Naive thymus-derived CD8-positive, alpha-beta T cell (primary cell): ENCODE measurements at regions of chr17 and their contacts with region 1.

Region 1: DNA sequence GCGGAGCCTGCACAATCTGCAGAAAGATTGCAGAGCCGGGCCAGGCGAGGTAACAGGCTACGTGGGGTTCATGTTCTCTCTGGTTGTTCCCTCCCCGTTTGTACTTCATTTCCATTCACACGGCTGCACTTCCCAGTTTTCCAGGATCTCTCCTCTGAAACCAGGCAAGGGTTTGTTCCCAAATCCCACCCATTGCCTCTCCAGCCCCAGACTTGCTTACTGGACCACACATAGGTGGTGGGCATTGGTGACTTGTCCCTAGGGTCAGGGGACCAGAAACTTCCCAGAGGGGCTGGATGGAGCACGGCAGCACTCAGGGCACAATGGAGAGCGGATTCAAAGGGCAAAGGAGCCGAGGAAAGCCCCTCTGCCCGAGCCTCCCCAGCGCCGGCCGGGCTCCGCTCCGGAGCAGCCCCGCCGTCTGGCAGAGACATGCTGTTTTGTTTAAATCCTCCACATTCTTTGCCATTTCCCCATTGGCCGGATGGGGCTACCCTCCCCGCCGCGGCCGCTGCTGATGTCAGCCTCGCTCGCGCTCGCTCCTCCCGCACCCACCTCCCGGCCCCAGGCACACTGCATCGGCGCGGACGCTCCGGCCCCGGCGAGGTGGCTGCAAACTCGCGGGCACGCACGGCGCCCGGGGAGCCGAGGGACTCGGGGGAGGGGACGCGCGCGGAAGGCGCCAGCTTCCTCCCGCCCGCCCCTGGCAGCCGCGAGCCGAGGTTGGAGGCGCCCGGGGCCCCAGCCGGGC is at the start of gene PITPNC1:
- DNase-seq: peak; percentile 81 to 93 (median 86)
- ATAC-seq: peak; percentile 70 to 74
- H3K4me3 Mint-ChIP-seq: peak within 1 kb of the TSS; percentile 89 to 99 (median 94)
- H3K27ac Mint-ChIP-seq: peak within 1 kb of the TSS; percentile 45 to 97 (median 94)
- H3K4me1 Mint-ChIP-seq: peaks cover 24 to 47% (median 44%) of the 10 kb centered on the region in 4 donors
- H3K27me3 Mint-ChIP-seq: no peaks in the 10 kb centered on the region
- polyA plus RNA-seq, gene PITPNC1: 119 to 159 (median 125) TPM

Region 2: GRCh38 chr17:67336859-67337258 is 40.1 kb before region 1 on chr17:
- POLR2A ChIA-PET with region 1: no interaction called
- DNase-seq: no peak
- ATAC-seq: no peak
- H3K4me3 Mint-ChIP-seq: no peak overlapping the region
- H3K27ac Mint-ChIP-seq: peak overlapping the region in 2 of 10 donors; percentile 19 to 67
- H3K4me1 Mint-ChIP-seq: no peaks in the 10 kb centered on the region
- H3K27me3 Mint-ChIP-seq: no peaks in the 10 kb centered on the region

Region 3: GRCh38 chr17:67347826-67348225 is 29.1 kb before region 1 on chr17:
- POLR2A ChIA-PET with region 1: no interaction called
- DNase-seq: no peak
- ATAC-seq: no peak
- H3K4me3 Mint-ChIP-seq: no peak overlapping the region
- H3K27ac Mint-ChIP-seq: peak overlapping the region in 3 of 10 donors; percentile 3 to 49 (median 34)
- H3K4me1 Mint-ChIP-seq: peaks cover 0 to 5% (median 2%) of the 10 kb centered on the region in 4 donors
- H3K27me3 Mint-ChIP-seq: no peaks in the 10 kb centered on the region

Region 4: DNA sequence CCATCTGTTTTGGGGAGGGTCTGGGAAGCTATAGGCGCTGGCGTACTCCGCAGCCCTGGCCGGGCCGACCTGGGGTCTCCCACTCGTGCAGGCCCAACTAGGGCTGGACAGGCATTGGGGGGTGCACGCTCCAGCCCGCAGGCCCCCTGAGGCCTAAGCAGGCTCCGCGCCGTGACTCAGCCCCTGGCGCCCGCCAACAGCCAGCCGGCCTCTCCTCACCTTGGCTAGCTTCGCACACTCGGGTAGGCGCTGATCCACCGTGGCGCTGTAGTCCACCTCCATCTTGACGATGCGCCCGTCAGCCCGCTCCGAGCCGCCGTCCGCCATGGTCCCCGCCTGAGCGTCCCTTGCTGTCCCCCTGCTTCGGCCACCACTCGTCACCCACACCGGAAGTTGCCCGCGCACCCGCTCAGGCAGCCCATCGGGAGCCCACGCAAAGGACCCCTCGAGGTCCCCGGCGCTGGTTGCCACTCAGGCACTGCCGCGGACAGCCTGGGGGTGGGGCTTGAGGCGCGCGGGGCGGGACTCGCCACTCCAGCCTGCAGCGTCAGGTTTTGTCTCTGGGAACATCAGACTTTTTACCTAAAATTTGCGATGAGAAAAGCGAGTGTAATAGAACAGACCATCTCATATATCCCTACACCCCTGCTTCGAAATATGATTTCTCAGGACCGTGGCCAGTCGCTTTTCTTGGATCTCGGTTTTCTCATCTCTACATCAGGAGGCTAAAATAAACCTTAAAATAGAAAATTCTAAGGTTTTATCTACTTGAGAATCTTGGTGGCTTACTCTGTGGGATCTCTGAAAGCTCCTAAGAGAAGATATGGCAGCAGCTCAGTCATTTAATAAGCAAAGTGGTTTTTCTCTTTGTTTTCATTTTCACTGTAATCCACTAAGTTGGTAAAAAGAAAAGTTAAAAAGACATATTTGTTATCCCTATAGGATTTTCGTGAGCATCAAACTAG is 10.4 kb before region 1 on chr17 and contains the start of gene PSMD12:
- POLR2A ChIA-PET with region 1: interaction called, 53 read pairs
- DNase-seq: peak; percentile 86 to 94 (median 93)
- ATAC-seq: peak; percentile 92 to 98
- H3K4me3 Mint-ChIP-seq: peak within 1 kb of the TSS; percentile 87 to 100 (median 96)
- H3K27ac Mint-ChIP-seq: peak within 1 kb of the TSS; percentile 84 to 100 (median 98)
- H3K4me1 Mint-ChIP-seq: peaks cover 24 to 51% (median 48%) of the 10 kb centered on the region in 4 donors
- H3K27me3 Mint-ChIP-seq: no peaks in the 10 kb centered on the region
- polyA plus RNA-seq, gene PSMD12: 32.0 to 33.0 (median 32.5) TPM

Region 5: GRCh38 chr17:67400193-67400592 is 23.3 kb after region 1 on chr17:
- POLR2A ChIA-PET with region 1: interaction called, 11 read pairs
- DNase-seq: peak in 4 of 10 donors; percentile 50 to 74 (median 66)
- ATAC-seq: peak; percentile 51 to 52
- H3K4me3 Mint-ChIP-seq: peak overlapping the region; percentile 65 to 92 (median 82)
- H3K27ac Mint-ChIP-seq: peak overlapping the region; percentile 91 to 100 (median 97)
- H3K4me1 Mint-ChIP-seq: peaks cover 25 to 85% (median 74%) of the 10 kb centered on the region in 4 donors
- H3K27me3 Mint-ChIP-seq: no peaks in the 10 kb centered on the region

Region 6: GRCh38 chr17:67431249-67432048 is 54.5 kb after region 1 on chr17:
- POLR2A ChIA-PET with region 1: interaction called, 54 read pairs
- DNase-seq: no peak
- ATAC-seq: peak in 1 of 2 donors; percentile 4
- H3K4me3 Mint-ChIP-seq: peak overlapping the region in 5 of 10 donors; percentile 1 to 36 (median 21)
- H3K27ac Mint-ChIP-seq: peak overlapping the region; percentile 63 to 93 (median 88)
- H3K4me1 Mint-ChIP-seq: peaks cover 31 to 82% (median 70%) of the 10 kb centered on the region in 4 donors
- H3K27me3 Mint-ChIP-seq: no peaks in the 10 kb centered on the region

Region 7: DNA sequence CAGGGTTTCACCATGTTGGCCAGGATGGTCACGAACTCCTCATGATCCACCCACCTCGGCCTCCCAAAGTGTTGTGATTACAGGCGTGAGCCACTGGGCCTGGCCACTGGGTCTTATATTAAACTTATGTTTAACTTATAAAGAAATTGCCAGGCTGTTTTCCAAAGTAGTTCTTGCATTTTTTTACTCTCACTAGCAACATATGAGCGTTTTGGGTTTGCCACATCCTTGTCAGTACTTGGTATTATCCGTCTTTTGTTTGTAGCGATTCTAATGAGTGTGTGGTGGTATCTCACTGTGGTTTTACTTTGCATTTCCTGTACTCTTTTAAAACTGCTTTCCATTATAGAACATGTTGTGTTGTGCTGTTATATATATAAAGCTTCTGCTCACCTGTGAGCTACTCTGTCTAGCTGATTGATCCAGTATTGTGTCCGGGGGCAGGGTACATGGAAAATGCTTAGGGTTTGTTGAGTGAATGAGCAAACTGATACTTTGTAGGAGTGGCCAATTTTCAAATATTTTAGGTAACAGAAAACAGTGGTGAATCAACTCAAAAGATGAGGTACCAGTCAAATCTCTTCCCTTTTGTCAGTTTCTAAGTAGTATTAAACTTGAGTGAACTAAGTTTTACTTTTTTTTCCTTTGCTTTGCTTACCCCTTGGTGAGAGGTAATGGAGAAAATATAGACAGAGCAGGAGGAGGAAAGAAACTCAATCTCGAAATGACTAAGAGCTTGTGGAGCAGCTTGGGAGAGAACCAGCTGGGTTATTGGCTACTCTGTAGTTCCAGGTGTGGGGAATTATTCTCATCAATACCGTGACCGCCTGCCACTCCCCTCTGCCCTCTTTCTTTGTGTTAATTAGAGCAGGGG is 76.0 kb after region 1 on chr17:
- POLR2A ChIA-PET with region 1: interaction called, 15 read pairs
- DNase-seq: peak in 4 of 10 donors; percentile 59 to 84 (median 75)
- ATAC-seq: peak; percentile 80 to 93
- H3K4me3 Mint-ChIP-seq: peak overlapping the region; percentile 63 to 88 (median 78)
- H3K27ac Mint-ChIP-seq: peak overlapping the region; percentile 89 to 100 (median 96)
- H3K4me1 Mint-ChIP-seq: peaks cover 32 to 97% (median 89%) of the 10 kb centered on the region in 4 donors
- H3K27me3 Mint-ChIP-seq: no peaks in the 10 kb centered on the region

Region 8: GRCh38 chr17:67475236-67475937 is 98.5 kb after region 1 on chr17:
- POLR2A ChIA-PET with region 1: interaction called, 240 read pairs
- DNase-seq: peak; percentile 68 to 91 (median 85)
- ATAC-seq: peak; percentile 70 to 75
- H3K4me3 Mint-ChIP-seq: peak overlapping the region; percentile 66 to 84 (median 76)
- H3K27ac Mint-ChIP-seq: peak overlapping the region; percentile 90 to 98 (median 96)
- H3K4me1 Mint-ChIP-seq: peaks cover 49 to 79% (median 71%) of the 10 kb centered on the region in 4 donors
- H3K27me3 Mint-ChIP-seq: no peaks in the 10 kb centered on the region

Region 9: DNA sequence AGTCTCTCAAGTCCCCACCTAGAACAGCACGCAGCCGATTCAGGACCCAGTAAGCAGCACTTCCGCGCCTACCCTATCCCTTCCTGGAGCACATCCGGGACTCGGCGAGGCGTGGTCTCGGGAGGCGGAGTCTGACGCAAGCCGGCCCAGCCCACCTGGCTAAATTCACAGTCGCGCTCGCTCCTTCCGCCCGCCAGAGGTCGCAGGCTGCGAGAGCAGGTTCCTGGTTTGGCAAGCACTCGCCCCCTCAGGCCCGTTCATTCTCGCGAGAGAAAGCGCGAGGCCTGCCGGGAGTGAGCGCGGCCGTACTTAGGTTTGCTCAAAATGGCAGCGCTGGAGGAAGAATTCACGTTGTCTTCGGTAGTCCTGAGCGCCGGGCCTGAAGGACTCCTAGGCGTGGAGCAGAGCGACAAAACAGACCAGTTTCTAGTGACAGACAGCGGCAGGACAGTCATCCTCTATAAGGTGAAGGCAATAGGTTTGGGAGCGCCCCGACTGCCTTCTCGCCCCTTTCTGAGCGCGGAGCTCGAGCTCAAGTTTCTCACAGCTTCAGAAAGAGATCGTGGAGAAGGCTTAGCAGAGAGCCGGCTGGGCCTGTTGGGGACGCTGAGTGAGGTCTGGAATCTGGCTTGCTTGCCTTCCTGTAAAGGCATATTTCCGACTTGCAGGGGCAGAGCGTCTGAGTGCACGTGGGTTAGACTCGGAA is 340.9 kb after region 1 on chr17 and contains the start of gene NOL11:
- POLR2A ChIA-PET with region 1: interaction called, 11 read pairs
- DNase-seq: peak; percentile 98 to 100 (median 100)
- ATAC-seq: peak; percentile 92 to 93
- H3K4me3 Mint-ChIP-seq: peak within 1 kb of the TSS; percentile 96 to 100 (median 98)
- H3K27ac Mint-ChIP-seq: peak within 1 kb of the TSS; percentile 94 to 100 (median 99)
- H3K4me1 Mint-ChIP-seq: peaks cover 5 to 42% (median 28%) of the 10 kb centered on the region in 4 donors
- H3K27me3 Mint-ChIP-seq: peaks cover 0 to 1% (median 0%) of the 10 kb centered on the region in 5 donors
- polyA plus RNA-seq, gene NOL11: 14.2 to 34.8 (median 25.5) TPM